AG04449 (cell line): ENCODE measurements at regions of chr11 and their contacts with region 1.

Region 1: GRCh38 chr11:32052218-32052617 is 38.7 kb upstream of the RCN1 start:
- DNase-seq: no peak
- H3K4me3 ChIP-seq: no peak overlapping the region
- CTCF ChIP-seq: peak; percentile 58

Region 2: DNA sequence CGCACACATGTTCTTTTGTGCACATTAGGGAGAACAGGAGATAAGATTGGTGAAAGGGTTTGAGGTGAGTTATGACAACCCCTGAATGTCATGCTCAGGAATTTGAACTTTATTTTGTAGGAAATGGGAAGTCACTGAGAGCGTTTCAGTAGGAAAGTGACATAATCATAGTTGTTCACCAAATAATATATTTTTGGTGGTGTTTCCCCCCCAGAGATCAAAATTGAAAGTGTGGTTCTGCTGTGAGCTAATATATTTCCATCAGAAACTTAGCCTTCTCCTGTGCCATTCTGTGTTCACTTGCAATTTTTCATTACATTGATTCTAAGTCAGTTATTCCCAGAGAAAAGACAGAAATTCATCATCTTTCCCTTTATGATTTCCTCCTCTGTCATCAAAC is 25.5 kb before region 1 on chr11:
- CTCF ChIA-PET with region 1: interaction called, 152 read pairs
- POLR2A ChIA-PET with region 1: no interaction called
- DNase-seq: no peak
- H3K4me3 ChIP-seq: no peak overlapping the region
- CTCF ChIP-seq: no peak

Region 3: GRCh38 chr11:32071811-32072210 is 19.6 kb after region 1 on chr11:
- CTCF ChIA-PET with region 1: interaction called, 186 read pairs
- POLR2A ChIA-PET with region 1: no interaction called
- DNase-seq: no peak
- H3K4me3 ChIP-seq: no peak overlapping the region
- CTCF ChIP-seq: peak; percentile 52

Region 4: DNA sequence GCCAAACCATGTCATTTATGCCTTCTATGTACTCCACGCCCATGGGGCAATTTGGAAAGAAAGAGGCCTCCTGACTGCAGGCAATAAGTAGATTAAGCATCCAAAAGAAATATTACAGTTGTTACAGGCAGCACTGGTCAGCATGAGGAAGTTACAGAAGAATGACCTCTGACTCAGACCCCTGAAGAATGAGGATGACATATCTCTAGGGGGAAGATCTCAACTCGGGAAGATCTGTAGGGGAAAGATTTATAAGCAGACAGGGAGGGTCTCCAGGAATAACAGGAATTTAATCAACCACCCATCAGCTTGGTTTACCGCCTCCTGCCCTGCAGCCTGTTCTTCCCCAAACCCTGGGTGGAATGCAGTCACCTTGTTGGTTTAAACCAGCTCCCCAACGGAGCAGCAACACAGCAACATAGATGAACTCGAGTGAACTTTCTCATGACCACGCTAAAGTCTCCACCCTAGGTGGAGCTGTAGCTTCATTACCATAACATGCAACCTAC is 96.7 kb after region 1 on chr11:
- CTCF ChIA-PET with region 1: interaction called, 76 read pairs
- POLR2A ChIA-PET with region 1: no interaction called
- DNase-seq: no peak
- H3K4me3 ChIP-seq: no peak overlapping the region
- CTCF ChIP-seq: no peak

Region 5: GRCh38 chr11:32162351-32162750 is 110.1 kb after region 1 on chr11:
- CTCF ChIA-PET with region 1: interaction called, 76 read pairs
- POLR2A ChIA-PET with region 1: no interaction called
- DNase-seq: no peak
- H3K4me3 ChIP-seq: no peak overlapping the region
- CTCF ChIP-seq: no peak